Left lung (tissue), 14 donors: ENCODE measurements at regions of chr15 and their contacts with region 1.

Region 1: DNA sequence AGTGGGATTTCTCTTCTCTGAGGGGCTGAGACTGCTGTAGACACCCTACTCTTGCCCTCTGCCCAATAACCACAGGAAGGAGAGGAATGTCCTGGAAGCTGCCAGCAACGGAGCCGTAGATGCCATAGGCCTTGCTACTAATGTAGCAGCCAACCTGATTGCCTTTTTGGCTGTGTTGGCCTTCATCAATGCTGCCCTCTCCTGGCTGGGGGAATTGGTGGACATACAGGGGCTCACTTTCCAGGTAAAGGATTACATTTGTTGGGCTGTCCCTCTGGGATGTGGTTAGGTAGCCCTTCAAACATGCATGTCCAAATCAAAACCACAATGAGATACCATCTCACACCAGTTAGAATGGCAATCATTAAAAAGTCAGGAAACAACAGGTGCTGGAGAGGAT is 16.1 kb downstream of the SLC28A2 start:
- DNase-seq: no peak
- ATAC-seq: peak; percentile 40
- H3K4me3 ChIP-seq: no peak overlapping the region
- H3K27ac ChIP-seq: no peak overlapping the region
- H3K4me1 ChIP-seq: no peaks in the 10 kb centered on the region
- H3K27me3 ChIP-seq: no peaks in the 10 kb centered on the region
- CTCF ChIP-seq: no peak

Region 2: GRCh38 chr15:45157974-45158373 is 110.2 kb before region 1 on chr15:
- intact Hi-C with region 1: loop called in 1 of 2 experiments (anchors 10 kb)
- DNase-seq: no peak
- ATAC-seq: no peak
- H3K4me3 ChIP-seq: no peak overlapping the region
- H3K27ac ChIP-seq: no peak overlapping the region
- H3K4me1 ChIP-seq: peaks cover 5 to 16% of the 10 kb centered on the region in 2 donors
- H3K27me3 ChIP-seq: no peaks in the 10 kb centered on the region
- CTCF ChIP-seq: no peak

Region 3: GRCh38 chr15:45594319-45594718 is 326.2 kb after region 1 on chr15:
- intact Hi-C with region 1: no loop called
- DNase-seq: no peak
- ATAC-seq: no peak
- H3K4me3 ChIP-seq: no peak overlapping the region
- H3K27ac ChIP-seq: no peak overlapping the region
- H3K4me1 ChIP-seq: peaks cover 4 to 19% of the 10 kb centered on the region in 2 donors
- H3K27me3 ChIP-seq: no peaks in the 10 kb centered on the region
- CTCF ChIP-seq: no peak